ENCODE measurements at regions of chr22 and their contacts with region 1.

Region 1: GRCh38 chr22:22357024-22357883 is 112.7 kb downstream of the VPREB1 start:
- DNase-seq: peak; percentile 99 to 100 (median 100)
- ATAC-seq: peak; percentile 99
- H3K4me3 ChIP-seq: no peak overlapping the region
- H3K27ac ChIP-seq: no peak overlapping the region
- H3K4me1 ChIP-seq: peaks cover 0 to 5% of the 10 kb centered on the region in 2 experiments; a peak in 1 of 5 replicates
- H3K27me3 ChIP-seq: peaks cover 11 to 20% of the 10 kb centered on the region in 2 experiments; a peak in 3 of 5 replicates
- CTCF ChIP-seq: peak; percentile 98 to 100 (median 99)
- EP300 ChIP-seq: peak; percentile 74
- POLR2A ChIP-seq: no peak
- RAD21 ChIP-seq: peak in 1 of 2 experiments; percentile 98; a peak in 3 of 4 replicates

Region 2: GRCh38 chr22:22019659-22020424 is 337.4 kb before region 1 on chr22:
- CTCF ChIA-PET with region 1: no interaction called
- POLR2A ChIA-PET with region 1: no interaction called
- in situ Hi-C with region 1: no loop called
- intact Hi-C with region 1: no loop called
- DNase-seq: peak in 2 of 4 experiments; percentile 47 to 53
- ATAC-seq: no peak
- H3K4me3 ChIP-seq: no peak overlapping the region
- H3K27ac ChIP-seq: no peak overlapping the region
- H3K4me1 ChIP-seq: peaks cover 18 to 25% of the 10 kb centered on the region in 2 experiments; a peak in 4 of 5 replicates
- H3K27me3 ChIP-seq: peaks cover 30 to 37% of the 10 kb centered on the region in 2 experiments
- CTCF ChIP-seq: 0 out of 6 replicates have a peak, but pooled peaks of 1 of the 3 experiments have one; percentile 3
- EP300 ChIP-seq: no peak
- POLR2A ChIP-seq: no peak
- RAD21 ChIP-seq: no peak

Region 3: DNA sequence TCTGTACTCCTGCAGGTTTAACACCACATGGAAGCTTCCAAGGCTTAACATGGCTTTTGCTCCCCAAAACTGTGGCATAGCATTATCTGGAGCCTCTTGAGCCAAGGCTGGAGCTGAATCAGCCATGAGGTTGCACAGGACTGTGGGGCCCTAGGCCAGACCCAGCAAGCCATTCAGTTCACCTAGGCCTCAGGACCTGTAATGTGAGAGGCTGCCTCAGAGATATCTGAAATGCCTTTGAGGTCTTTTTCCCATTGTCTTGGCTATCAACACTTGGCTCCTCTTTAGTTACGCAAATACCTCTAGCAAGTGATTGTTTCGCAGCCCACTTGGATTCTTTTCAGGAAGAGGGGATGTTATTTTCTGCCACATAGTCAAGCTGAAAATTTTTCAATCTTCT is 40.7 kb before region 1 on chr22:
- CTCF ChIA-PET with region 1: no interaction called
- POLR2A ChIA-PET with region 1: no interaction called
- in situ Hi-C with region 1: no loop called
- intact Hi-C with region 1: no loop called
- DNase-seq: no peak
- ATAC-seq: no peak
- H3K4me3 ChIP-seq: no peak overlapping the region
- H3K27ac ChIP-seq: no peak overlapping the region
- H3K4me1 ChIP-seq: no peaks in the 10 kb centered on the region
- H3K27me3 ChIP-seq: no peaks in the 10 kb centered on the region
- CTCF ChIP-seq: no peak
- EP300 ChIP-seq: no peak
- POLR2A ChIP-seq: no peak
- RAD21 ChIP-seq: no peak

Region 4: DNA sequence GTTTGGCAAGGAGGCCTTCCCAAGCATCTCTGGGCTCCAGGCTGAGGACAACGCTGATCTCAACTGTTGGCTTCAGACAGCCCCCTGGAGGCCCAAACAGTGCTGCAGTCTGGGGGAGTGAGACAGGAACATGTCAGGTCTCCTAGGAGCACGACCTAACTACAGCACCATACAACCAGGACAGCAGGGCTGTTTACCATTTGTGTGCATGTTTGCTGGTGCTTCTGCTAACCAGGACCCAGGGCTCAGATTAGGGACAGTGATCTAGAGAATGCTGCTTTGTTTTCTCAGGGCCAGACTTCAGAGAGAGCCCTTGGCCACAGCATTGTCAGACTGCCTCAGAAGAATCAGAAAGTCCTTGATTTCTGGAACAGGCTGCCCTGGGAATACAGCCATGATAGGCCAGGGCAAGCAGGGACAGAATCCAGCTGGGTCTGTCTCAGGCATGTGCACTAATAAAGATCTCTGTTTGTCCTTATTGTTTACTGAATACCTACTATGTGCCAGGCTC is 13.8 kb after region 1 on chr22:
- CTCF ChIA-PET with region 1: interaction called, 12 read pairs
- POLR2A ChIA-PET with region 1: interaction called, 6 read pairs
- in situ Hi-C with region 1: no loop called
- intact Hi-C with region 1: loop called (anchors 1 kb)
- DNase-seq: peak; percentile 53 to 76 (median 66)
- ATAC-seq: peak; percentile 89
- H3K4me3 ChIP-seq: no peak overlapping the region
- H3K27ac ChIP-seq: no peak overlapping the region
- H3K4me1 ChIP-seq: no peaks in the 10 kb centered on the region
- H3K27me3 ChIP-seq: peaks cover 2 to 21% of the 10 kb centered on the region in 2 experiments; a peak in 3 of 5 replicates
- CTCF ChIP-seq: peak in 2 of 3 experiments; percentile 83 to 90; a peak in 4 of 6 replicates
- EP300 ChIP-seq: no peak
- POLR2A ChIP-seq: no peak
- RAD21 ChIP-seq: peak in 1 of 2 experiments; percentile 77; a peak in 2 of 4 replicates

Region 5: DNA sequence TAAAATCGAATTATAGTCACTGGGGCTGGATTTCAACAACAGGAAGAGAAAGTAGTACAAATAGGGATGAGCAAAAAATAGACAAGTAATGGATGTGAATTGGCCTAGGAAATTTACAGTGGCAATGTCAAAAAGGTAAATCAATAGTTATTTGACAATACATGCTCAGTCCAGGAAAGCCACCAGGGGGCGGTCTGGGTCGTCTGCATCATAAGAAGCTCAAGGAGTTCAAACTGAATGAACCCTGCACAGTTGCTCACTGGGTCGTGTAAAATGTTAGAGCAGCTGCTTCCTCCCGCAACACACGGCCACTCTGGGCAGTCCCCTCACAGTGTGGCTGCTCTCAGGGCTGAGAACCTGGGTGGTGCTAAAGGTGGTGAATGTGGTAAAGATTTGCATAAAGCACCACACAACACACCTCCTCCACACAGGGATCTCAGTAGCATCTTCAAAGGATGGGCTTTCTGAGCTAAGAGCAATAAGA is 65.4 kb after region 1 on chr22:
- CTCF ChIA-PET with region 1: interaction called, 11 read pairs
- POLR2A ChIA-PET with region 1: interaction called, 4 read pairs
- in situ Hi-C with region 1: no loop called
- intact Hi-C with region 1: loop called (anchors 2 kb)
- DNase-seq: peak; percentile 85 to 96 (median 89)
- ATAC-seq: peak; percentile 92
- H3K4me3 ChIP-seq: no peak overlapping the region
- H3K27ac ChIP-seq: no peak overlapping the region
- H3K4me1 ChIP-seq: no peaks in the 10 kb centered on the region
- H3K27me3 ChIP-seq: peaks cover 31 to 34% of the 10 kb centered on the region in 2 experiments
- CTCF ChIP-seq: peak in 1 of 3 experiments; percentile 99; a peak in 2 of 6 replicates
- EP300 ChIP-seq: no peak
- POLR2A ChIP-seq: no peak
- RAD21 ChIP-seq: no peak

Region 6: DNA sequence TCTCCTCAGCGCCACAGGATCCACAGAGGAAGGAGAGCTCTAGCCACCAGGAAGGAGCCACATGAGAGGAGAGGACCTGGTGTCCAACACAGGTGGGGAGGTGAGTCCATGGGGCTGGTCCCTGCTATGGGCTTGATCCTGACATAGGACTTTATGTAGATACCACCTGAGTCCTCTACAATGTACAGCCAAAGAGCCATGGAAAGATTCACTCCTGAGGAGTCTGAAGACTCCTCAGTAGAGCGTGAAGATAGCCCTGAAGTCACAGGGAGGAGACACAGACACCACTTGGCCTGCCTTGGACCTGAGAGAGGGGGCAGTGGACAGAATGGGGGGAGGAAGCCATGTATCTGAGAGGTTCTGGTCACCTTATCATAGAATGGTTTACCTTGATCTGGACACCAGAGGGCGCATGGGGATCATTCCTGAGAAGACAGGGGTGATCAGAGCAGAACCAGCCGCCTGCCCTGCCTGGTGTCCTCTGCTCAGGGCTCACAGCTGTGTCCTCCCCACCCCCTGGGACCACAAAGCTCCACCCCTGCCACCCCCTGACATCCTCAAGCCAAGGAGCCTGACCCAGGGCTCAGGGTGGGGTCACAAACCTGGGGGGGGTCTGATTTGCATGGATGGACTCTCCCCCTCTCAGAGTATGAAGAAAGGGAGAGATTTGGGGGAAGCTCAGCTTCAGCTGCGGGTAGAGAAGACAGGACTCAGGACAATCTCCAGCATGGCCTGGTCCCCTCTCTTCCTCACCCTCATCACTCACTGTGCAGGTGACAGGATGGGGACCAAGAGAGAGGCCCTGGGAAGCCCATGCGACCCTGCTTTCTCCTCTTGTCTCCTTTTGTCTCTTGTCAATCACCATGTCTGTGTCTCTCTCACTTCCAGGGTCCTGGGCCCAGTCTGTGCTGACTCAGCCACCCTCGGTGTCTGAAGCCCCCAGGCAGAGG is 74.3 kb after region 1 on chr22:
- CTCF ChIA-PET with region 1: interaction called, 4 read pairs
- POLR2A ChIA-PET with region 1: no interaction called
- in situ Hi-C with region 1: no loop called
- intact Hi-C with region 1: loop called (anchors 2 kb)
- DNase-seq: peak; percentile 95 to 99 (median 98)
- ATAC-seq: peak; percentile 98
- H3K4me3 ChIP-seq: no peak overlapping the region
- H3K27ac ChIP-seq: no peak overlapping the region
- H3K4me1 ChIP-seq: no peaks in the 10 kb centered on the region
- H3K27me3 ChIP-seq: peaks cover 18 to 32% of the 10 kb centered on the region in 2 experiments; a peak in 4 of 5 replicates
- CTCF ChIP-seq: peak; percentile 97 to 100 (median 99)
- EP300 ChIP-seq: no peak
- POLR2A ChIP-seq: no peak
- RAD21 ChIP-seq: peak; percentile 92 to 99

Measured in K562 (cell line).